HCT116 (cell line): ENCODE measurements at regions of chr10 and their contacts with region 1.

Region 1: GRCh38 chr10:49164559-49165188 is 23.5 kb downstream of the TMEM273 start:
- DNase-seq: peak; percentile 48
- ATAC-seq: peak; percentile 96
- H3K4me3 ChIP-seq: no peak overlapping the region
- H3K27ac ChIP-seq: no peak overlapping the region
- H3K4me1 ChIP-seq: peaks cover 2 to 4% of the 10 kb centered on the region in 2 experiments; a peak in 1 of 4 replicates
- H3K27me3 ChIP-seq: peaks cover 24% of the 10 kb centered on the region; the same call in 1 of the 2 replicates
- CTCF ChIP-seq: peak; percentile 42 to 86 (median 78); a peak in 5 of 6 replicates
- POLR2A ChIP-seq: no peak
- RAD21 ChIP-seq: peak; percentile 65

Region 2: GRCh38 chr10:48551861-48552591 is 612.6 kb before region 1 on chr10:
- CTCF ChIA-PET with region 1: no interaction called
- POLR2A ChIA-PET with region 1: no interaction called
- RAD21 ChIA-PET with region 1: no interaction called
- intact Hi-C with region 1: no loop called
- DNase-seq: peak; percentile 15
- ATAC-seq: peak; percentile 82
- H3K4me3 ChIP-seq: no peak overlapping the region
- H3K27ac ChIP-seq: no peak overlapping the region
- H3K4me1 ChIP-seq: no peaks in the 10 kb centered on the region
- H3K27me3 ChIP-seq: no peaks in the 10 kb centered on the region
- CTCF ChIP-seq: peak; percentile 63 to 94 (median 75)
- POLR2A ChIP-seq: no peak
- RAD21 ChIP-seq: peak; percentile 76

Region 3: GRCh38 chr10:48885383-48885782 is 279.3 kb before region 1 on chr10:
- CTCF ChIA-PET with region 1: interaction called, 3 read pairs
- POLR2A ChIA-PET with region 1: no interaction called
- RAD21 ChIA-PET with region 1: no interaction called
- intact Hi-C with region 1: loop called (anchors 1 kb)
- DNase-seq: peak; percentile 8
- ATAC-seq: peak; percentile 86
- H3K4me3 ChIP-seq: no peak overlapping the region
- H3K27ac ChIP-seq: no peak overlapping the region
- H3K4me1 ChIP-seq: no peaks in the 10 kb centered on the region
- H3K27me3 ChIP-seq: peaks cover 22% of the 10 kb centered on the region; the same call in 1 of the 2 replicates
- CTCF ChIP-seq: peak; percentile 36 to 63 (median 43); a peak in 5 of 6 replicates
- POLR2A ChIP-seq: no peak
- RAD21 ChIP-seq: peak; percentile 51

Region 4: GRCh38 chr10:48976196-48976595 is 188.5 kb before region 1 on chr10:
- CTCF ChIA-PET with region 1: interaction called, 14 read pairs
- POLR2A ChIA-PET with region 1: no interaction called
- RAD21 ChIA-PET with region 1: interaction called in 1 of 2 experiments, 7 read pairs
- intact Hi-C with region 1: loop called (anchors 1 kb)
- DNase-seq: peak; percentile 18
- ATAC-seq: peak; percentile 92
- H3K4me3 ChIP-seq: no peak overlapping the region
- H3K27ac ChIP-seq: no peak overlapping the region
- H3K4me1 ChIP-seq: no peaks in the 10 kb centered on the region
- H3K27me3 ChIP-seq: peaks cover 14% of the 10 kb centered on the region; the same call in 1 of the 2 replicates
- CTCF ChIP-seq: peak; percentile 48 to 53 (median 49); a peak in 5 of 6 replicates
- POLR2A ChIP-seq: no peak
- RAD21 ChIP-seq: peak; percentile 64

Region 5: GRCh38 chr10:48981310-48981907 is 183.3 kb before region 1 on chr10:
- CTCF ChIA-PET with region 1: interaction called, 14 read pairs
- POLR2A ChIA-PET with region 1: no interaction called
- RAD21 ChIA-PET with region 1: interaction called in 1 of 2 experiments, 7 read pairs
- intact Hi-C with region 1: loop called (anchors 1 kb)
- DNase-seq: peak; percentile 42
- ATAC-seq: peak; percentile 99
- H3K4me3 ChIP-seq: no peak overlapping the region
- H3K27ac ChIP-seq: no peak overlapping the region
- H3K4me1 ChIP-seq: no peaks in the 10 kb centered on the region
- H3K27me3 ChIP-seq: no peaks in the 10 kb centered on the region
- CTCF ChIP-seq: peak; percentile 53 to 88 (median 86); a peak in 5 of 6 replicates
- POLR2A ChIP-seq: no peak
- RAD21 ChIP-seq: peak; percentile 72